ENCODE measurements at regions of chr13 and their contacts with region 1.

Region 1: GRCh38 chr13:44969551-44970484 is 19.5 kb downstream of the NUFIP1 start:
- DNase-seq: peak in 1 of 2 experiments; percentile 57
- H3K4me3 ChIP-seq: no peak overlapping the region
- H3K27ac ChIP-seq: no peak overlapping the region
- H3K4me1 ChIP-seq: peaks cover 15% of the 10 kb centered on the region
- H3K27me3 ChIP-seq: no peaks in the 10 kb centered on the region
- CTCF ChIP-seq: peak; percentile 88

Region 2: DNA sequence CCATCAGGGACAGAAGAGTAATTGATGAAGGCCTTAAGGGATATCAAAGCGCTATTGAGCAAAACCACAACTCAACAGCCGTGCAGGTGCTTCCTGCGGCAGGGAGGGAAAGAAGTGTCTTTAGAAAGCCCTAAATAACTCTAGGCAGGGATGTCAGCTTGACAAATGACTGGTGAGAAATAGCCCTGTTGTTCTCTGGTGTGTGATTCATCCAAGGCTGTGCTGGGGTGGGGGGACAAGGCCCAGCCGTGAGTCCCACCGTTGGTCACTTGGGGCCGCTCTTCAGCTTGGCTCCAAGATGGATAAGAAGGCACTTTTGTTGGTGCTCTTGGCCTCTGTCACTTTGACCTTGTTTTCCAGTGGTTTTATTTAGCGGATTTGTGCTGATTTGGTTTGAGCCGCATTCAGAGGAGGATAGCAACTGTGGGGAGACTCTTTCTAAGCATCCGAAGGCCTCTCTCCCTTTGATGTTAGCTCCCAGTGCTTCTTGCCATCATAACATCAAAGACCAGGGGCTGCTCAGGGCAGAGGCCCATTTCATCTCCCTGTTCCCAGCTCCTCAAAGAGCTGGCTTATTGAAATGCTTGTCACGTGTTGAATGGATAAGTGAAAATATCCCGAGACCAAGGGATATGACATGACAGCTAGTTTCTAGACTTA is 726.5 kb before region 1 on chr13:
- CTCF ChIA-PET with region 1: no interaction called
- POLR2A ChIA-PET with region 1: no interaction called
- intact Hi-C with region 1: loop called (anchors 10 kb)
- DNase-seq: peak; percentile 78 to 88
- H3K4me3 ChIP-seq: no peak overlapping the region
- H3K27ac ChIP-seq: peak overlapping the region; percentile 58
- H3K4me1 ChIP-seq: peaks cover 16% of the 10 kb centered on the region
- H3K27me3 ChIP-seq: no peaks in the 10 kb centered on the region
- CTCF ChIP-seq: peak; percentile 74

Region 3: DNA sequence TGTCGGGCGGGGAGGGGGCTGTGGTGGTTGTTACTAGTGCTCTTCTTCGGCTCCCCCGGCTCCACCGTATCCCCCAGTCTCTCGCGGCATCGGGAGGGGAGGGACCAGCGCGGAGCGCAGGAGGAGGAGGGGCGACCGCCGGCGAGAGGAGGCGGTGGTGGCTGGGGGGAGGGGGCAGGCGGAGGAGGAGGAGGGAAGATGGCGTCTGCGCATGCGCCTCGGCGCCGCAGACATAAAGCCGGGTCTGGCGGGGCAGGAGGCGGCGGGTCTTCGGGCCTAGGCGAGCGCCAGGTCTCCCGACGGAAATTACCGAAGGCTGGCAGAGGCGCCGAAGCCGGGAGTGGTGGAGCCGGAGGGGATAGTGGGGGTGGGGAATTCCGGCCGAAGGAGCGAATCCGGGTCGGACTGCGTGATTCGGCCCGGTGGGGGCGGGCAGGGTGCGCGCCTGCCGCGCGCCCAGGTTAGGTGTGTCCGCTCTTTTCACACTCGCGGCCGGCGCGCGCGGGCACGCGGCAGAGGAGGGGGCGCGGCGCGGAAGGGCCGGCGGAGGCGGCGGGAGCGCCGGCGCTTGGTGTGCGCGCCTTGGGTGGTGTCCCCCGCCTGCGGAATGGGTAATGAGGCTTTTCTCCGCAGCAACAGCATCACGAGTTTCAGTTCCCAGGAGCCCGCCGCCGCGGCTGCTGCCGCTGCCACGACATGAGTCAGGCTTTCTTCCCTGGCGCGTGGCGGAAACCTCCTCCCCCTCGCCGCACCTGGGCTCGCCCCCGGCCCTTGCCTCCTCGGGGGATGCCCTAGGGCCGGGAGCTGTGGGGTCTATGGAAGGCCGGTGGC is 392.4 kb before region 1 on chr13:
- CTCF ChIA-PET with region 1: no interaction called
- POLR2A ChIA-PET with region 1: no interaction called
- intact Hi-C with region 1: loop called (anchors 5 kb)
- DNase-seq: peak; percentile 83 to 95
- H3K4me3 ChIP-seq: peak overlapping the region; percentile 94
- H3K27ac ChIP-seq: peak overlapping the region; percentile 97
- H3K4me1 ChIP-seq: peaks cover 36% of the 10 kb centered on the region
- H3K27me3 ChIP-seq: no peaks in the 10 kb centered on the region
- CTCF ChIP-seq: no peak

Region 4: DNA sequence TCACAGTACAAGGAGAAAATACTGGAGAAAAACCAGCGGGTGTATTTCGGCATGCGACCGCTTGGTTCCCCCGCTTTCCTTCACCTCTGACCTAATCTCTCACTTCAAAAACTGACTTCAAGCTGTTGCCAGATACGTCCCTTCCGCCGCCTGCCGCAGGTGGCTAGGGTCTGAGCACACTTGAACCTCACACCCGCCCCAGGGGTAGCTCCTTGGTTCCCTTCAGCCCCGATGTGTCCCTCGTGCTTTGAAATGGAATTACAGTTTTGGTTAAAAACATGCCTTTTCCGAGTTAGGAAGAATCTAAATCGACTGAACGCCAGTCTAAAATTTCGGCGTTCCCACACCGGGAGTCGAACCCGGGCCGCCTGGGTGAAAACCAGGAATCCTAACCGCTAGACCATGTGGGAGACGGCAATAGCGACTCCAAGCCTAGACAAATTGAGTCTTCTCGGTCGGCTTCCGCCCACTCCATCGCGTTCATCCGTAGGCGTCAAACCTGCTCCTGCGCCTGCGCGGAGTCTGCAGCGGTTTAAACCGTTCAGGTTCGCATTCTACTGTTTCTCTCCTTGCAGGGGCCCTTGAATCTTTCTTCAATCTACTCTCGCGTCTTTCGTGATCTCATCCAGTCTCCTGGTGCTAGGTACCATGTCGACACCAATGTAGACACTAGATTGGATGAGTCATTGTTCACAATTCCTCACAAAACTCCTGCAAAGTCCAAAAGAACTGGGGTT is 52.1 kb before region 1 on chr13:
- CTCF ChIA-PET with region 1: no interaction called
- POLR2A ChIA-PET with region 1: no interaction called
- intact Hi-C with region 1: loop called (anchors 5 kb)
- DNase-seq: peak; percentile 91 to 94
- H3K4me3 ChIP-seq: peak overlapping the region; percentile 63
- H3K27ac ChIP-seq: peak overlapping the region; percentile 86
- H3K4me1 ChIP-seq: peaks cover 34% of the 10 kb centered on the region
- H3K27me3 ChIP-seq: no peaks in the 10 kb centered on the region
- CTCF ChIP-seq: peak; percentile 37; the same call in 1 of the 2 replicates

Region 5: DNA sequence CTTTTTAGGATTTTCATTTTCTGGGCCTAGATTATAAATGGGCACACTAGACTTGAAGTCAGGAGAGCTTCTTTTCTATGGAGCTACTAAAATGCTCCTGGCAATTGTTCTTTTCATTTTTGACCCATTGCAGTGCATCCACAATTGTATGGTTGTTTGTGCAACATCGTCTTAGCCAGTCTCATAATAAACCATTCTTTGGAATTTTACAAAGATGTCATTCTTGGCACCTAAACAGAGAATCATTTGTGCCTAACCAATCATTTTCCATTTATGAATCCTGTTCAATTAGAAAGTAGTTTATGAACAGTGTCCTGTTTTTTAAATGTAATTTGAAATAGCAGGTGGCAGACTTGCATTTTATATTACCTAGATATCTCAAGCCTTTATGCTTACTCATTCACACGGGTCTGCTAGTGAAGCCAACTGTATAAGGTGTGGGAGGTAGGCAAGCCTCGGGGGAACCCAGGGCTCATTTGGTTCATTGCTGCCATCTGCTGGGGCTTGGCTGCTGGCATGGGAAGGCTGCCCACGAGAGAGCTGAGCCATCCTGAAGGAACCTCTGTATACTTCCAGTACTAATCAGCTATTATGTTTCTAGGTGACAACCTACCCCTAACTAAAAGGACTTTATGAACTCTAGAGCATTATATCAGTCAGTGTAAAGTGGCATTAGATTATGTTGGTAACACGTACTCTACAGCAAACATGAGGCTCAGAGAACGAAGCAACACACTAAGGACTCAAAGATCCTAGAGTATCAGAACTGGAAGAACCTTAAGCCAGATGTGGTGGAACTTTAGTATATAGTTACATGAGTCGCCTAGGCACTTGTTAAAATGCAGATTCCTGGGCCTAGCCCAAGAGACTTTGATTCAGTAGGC is 311.2 kb after region 1 on chr13:
- CTCF ChIA-PET with region 1: interaction called, 4 read pairs
- POLR2A ChIA-PET with region 1: no interaction called
- intact Hi-C with region 1: loop called (anchors 1 kb)
- DNase-seq: peak; percentile 75 to 82
- H3K4me3 ChIP-seq: no peak overlapping the region
- H3K27ac ChIP-seq: peak overlapping the region; percentile 47
- H3K4me1 ChIP-seq: peaks cover 8% of the 10 kb centered on the region
- H3K27me3 ChIP-seq: no peaks in the 10 kb centered on the region
- CTCF ChIP-seq: peak; percentile 83

Region 6: GRCh38 chr13:45393941-45394570 is 424.2 kb after region 1 on chr13:
- CTCF ChIA-PET with region 1: interaction called, 4 read pairs
- POLR2A ChIA-PET with region 1: no interaction called
- intact Hi-C with region 1: loop called (anchors 5 kb)
- DNase-seq: peak; percentile 59 to 61
- H3K4me3 ChIP-seq: no peak overlapping the region
- H3K27ac ChIP-seq: no peak overlapping the region
- H3K4me1 ChIP-seq: no peaks in the 10 kb centered on the region
- H3K27me3 ChIP-seq: no peaks in the 10 kb centered on the region
- CTCF ChIP-seq: peak; percentile 74